HepG2 (cell line): ENCODE measurements at regions of chr11 and their contacts with region 1.

Region 1: GRCh38 chr11:118689851-118690552 is 10.6 kb upstream of the TREH start:
- DNase-seq: peak; percentile 90
- ATAC-seq: peak; percentile 90
- H3K4me3 ChIP-seq: peak overlapping the region; percentile 53 to 75 (median 57); a peak in 5 of 6 replicates
- H3K27ac ChIP-seq: peak overlapping the region; percentile 63
- H3K4me1 ChIP-seq: peaks cover 70% of the 10 kb centered on the region
- H3K27me3 ChIP-seq: peaks cover 0 to 6% of the 10 kb centered on the region in 2 experiments; a peak in 1 of 5 replicates
- CTCF ChIP-seq: peak; percentile 92
- EP300 ChIP-seq: no peak
- POLR2A ChIP-seq: peak in 1 of 2 experiments; percentile 24; a peak in 2 of 4 replicates
- RAD21 ChIP-seq: peak; percentile 98

Region 2: DNA sequence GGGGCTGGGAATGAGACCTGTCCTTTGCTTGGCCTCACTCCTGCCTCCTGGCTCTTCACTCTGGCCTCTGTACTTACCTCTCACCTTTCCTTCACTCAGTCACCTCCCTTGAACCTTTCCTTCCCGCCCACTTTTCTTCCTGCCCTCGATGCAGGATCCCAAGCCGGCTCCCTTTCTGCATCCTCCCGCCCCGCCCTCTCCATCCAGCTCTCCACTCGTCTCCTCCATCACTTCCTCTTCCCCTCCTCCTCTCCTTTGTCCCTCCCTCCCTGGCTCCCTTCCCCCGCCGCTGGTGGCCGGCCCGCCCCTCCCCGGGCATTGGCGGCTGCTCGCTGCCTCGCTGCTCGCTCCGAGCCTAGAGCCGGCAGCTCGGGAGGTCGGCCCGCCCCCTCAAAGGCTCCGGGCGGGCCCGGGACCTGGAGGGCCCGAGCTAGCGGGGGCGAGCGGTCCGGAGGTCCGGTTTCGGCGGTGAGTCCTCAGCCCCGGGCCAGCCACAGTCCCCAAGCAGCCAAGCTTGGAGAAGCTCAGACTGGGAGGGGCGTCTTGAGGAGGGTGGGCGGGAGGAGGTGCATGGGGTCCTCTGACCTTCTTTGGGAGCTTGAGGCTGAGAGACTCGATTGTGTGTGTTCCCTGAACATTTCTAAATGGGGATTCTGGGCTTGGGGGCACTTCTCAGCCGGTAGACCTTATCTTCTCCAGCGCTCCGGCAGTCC is 68.8 kb before region 1 on chr11:
- CTCF ChIA-PET with region 1: no interaction called
- POLR2A ChIA-PET with region 1: interaction called, 11 read pairs
- in situ Hi-C with region 1: no loop called
- intact Hi-C with region 1: no loop called
- DNase-seq: peak; percentile 85
- ATAC-seq: peak; percentile 80
- H3K4me3 ChIP-seq: peak overlapping the region; percentile 81 to 97 (median 87)
- H3K27ac ChIP-seq: peak overlapping the region; percentile 95
- H3K4me1 ChIP-seq: peaks cover 57% of the 10 kb centered on the region
- H3K27me3 ChIP-seq: no peaks in the 10 kb centered on the region; a peak in 1 of 5 replicates
- CTCF ChIP-seq: no peak; the same call in 1 of the 2 replicates
- EP300 ChIP-seq: no peak
- POLR2A ChIP-seq: peak in 1 of 2 experiments; percentile 23; a peak in 2 of 4 replicates
- RAD21 ChIP-seq: no peak

Region 3: DNA sequence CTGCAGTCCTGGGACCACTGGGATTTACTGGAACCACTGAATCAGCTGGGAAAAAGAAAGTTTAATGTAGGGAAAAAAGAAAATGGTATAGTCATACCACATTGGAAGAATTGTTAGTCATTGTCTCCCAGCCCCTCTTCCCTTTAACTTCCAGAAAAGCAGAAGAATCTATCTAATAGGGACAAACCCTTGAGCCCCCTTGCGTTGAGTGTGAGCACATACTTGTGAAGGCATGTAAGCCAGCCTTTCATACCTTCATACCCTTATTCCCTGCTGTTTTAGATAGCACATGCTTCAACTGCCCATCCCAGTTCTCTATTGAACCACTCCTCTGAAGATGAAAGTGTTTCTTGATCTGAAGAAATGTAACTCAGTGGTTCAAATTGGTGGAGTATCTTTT is 17.2 kb before region 1 on chr11:
- CTCF ChIA-PET with region 1: no interaction called
- POLR2A ChIA-PET with region 1: interaction called, 14 read pairs
- in situ Hi-C with region 1: no loop called
- intact Hi-C with region 1: no loop called
- DNase-seq: no peak
- ATAC-seq: peak; percentile 63
- H3K4me3 ChIP-seq: peak overlapping the region in 1 of 3 experiments; percentile 1; a peak in 1 of 6 replicates
- H3K27ac ChIP-seq: peak overlapping the region; percentile 76
- H3K4me1 ChIP-seq: peaks cover 44% of the 10 kb centered on the region
- H3K27me3 ChIP-seq: no peaks in the 10 kb centered on the region
- CTCF ChIP-seq: peak; percentile 42
- EP300 ChIP-seq: no peak
- POLR2A ChIP-seq: no peak
- RAD21 ChIP-seq: no peak

Region 4: DNA sequence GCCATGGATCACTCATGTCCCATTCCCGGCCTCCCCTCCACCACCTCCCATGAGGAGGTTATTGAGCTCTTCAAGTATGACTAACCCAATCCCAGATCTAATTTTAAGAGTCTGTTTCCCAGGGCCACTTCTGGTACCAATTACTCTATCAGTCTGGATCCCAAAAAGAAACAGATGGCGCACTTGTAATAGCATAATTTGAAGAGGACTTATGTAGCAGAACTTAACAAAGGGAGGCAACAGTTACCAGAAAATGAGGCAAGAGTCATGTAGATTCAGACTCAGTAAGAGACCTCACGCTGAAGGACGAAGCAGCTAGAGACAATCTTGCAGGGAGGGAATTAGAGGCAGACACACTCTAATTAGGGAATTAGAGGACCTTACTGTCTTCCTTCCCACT is 54.0 kb after region 1 on chr11:
- CTCF ChIA-PET with region 1: no interaction called
- POLR2A ChIA-PET with region 1: interaction called, 3 read pairs
- in situ Hi-C with region 1: no loop called
- intact Hi-C with region 1: loop called (anchors 10 kb)
- DNase-seq: no peak
- ATAC-seq: no peak; the same call in 2 of the 3 replicates
- H3K4me3 ChIP-seq: no peak overlapping the region
- H3K27ac ChIP-seq: no peak overlapping the region
- H3K4me1 ChIP-seq: peaks cover 29% of the 10 kb centered on the region
- H3K27me3 ChIP-seq: no peaks in the 10 kb centered on the region; a peak in 1 of 5 replicates
- CTCF ChIP-seq: no peak
- EP300 ChIP-seq: no peak
- POLR2A ChIP-seq: no peak
- RAD21 ChIP-seq: no peak

Region 5: GRCh38 chr11:118928108-118928870 is 238.3 kb after region 1 on chr11:
- CTCF ChIA-PET with region 1: interaction called, 3 read pairs
- POLR2A ChIA-PET with region 1: interaction called, 3 read pairs
- in situ Hi-C with region 1: no loop called
- intact Hi-C with region 1: loop called (anchors 1 kb)
- DNase-seq: peak; percentile 87
- ATAC-seq: peak; percentile 77
- H3K4me3 ChIP-seq: peak overlapping the region; percentile 71 to 89 (median 81)
- H3K27ac ChIP-seq: peak overlapping the region; percentile 50
- H3K4me1 ChIP-seq: peaks cover 58% of the 10 kb centered on the region
- H3K27me3 ChIP-seq: peaks cover 2 to 7% of the 10 kb centered on the region in 2 experiments; a peak in 3 of 5 replicates
- CTCF ChIP-seq: peak; percentile 94
- EP300 ChIP-seq: no peak
- POLR2A ChIP-seq: no peak
- RAD21 ChIP-seq: peak; percentile 88